ENCODE measurements at regions of chr12 and their contacts with region 1.

Region 1: GRCh38 chr12:100404769-100405407 is 48.0 kb downstream of the SLC17A8 start:
- DNase-seq: peak; percentile 45
- H3K4me3 Mint-ChIP-seq: no peak overlapping the region
- H3K27ac Mint-ChIP-seq: no peak overlapping the region
- H3K4me1 Mint-ChIP-seq: no peaks in the 10 kb centered on the region
- H3K27me3 Mint-ChIP-seq: peaks cover 3% of the 10 kb centered on the region

Region 2: DNA sequence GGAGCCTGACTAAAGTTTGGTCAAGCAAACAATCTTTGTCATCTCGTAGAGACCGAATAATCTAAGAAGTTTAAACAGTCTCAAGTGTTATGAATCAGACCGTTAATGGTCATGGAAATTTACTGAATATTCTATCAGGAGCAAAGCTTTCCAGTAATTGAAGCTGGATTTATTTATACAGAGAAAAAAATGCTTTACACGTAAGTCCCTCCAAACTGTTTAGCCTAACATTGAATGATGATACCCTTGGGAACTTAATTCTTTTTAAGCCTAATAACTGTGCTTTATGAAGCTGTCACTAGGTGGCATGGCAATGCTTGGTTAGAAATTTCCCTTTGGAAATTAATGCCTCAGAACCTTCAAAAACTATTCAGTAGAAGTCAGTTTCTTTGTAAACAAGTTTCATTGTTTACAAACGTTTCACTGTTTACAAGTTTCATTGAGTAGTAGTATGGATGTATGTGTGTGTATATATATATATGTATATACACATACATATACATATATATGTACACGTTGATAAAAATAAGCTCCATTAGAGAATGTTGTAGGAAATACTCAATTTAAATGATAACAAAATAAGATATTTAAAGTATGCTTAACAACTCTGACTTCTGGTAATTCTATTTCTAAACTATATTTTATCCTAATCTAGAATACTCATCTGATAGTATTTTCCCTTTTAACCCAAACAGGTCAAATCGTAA is 170.1 kb before region 1 on chr12:
- CTCF ChIA-PET with region 1: interaction called, 17 read pairs
- POLR2A ChIA-PET with region 1: no interaction called
- DNase-seq: no peak
- H3K4me3 Mint-ChIP-seq: no peak overlapping the region
- H3K27ac Mint-ChIP-seq: no peak overlapping the region
- H3K4me1 Mint-ChIP-seq: no peaks in the 10 kb centered on the region
- H3K27me3 Mint-ChIP-seq: no peaks in the 10 kb centered on the region

Measured in activated CD4-positive, alpha-beta memory T cell treated with anti-CD3 and anti-CD28 coated beads, Interleukin-2, amount 10 ng/mL, durations not matched to agents 7 days and 5 days (primary cell).